Vagina (tissue), 2 donors: ENCODE measurements at regions of chr2 and their contacts with region 1.

Region 1: DNA sequence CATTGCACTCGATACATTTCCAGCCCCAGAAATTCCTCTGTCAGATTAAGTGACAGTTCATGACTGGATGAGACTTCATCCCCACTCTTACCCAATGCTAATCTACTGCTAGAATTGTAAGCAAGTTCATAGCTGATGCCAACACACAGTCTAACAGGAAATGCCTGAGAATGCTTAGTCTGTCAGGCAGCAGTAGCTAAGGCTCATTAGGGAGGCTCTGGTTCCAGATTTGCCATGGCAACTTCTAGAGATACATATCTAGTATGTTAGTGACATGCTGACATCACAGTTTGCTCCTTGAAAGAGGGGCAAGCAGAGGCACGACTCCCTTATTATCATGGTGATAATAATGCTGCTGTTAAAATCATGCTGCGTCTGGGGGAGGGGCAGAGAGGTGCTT is 198.4 kb downstream of the RBM43 start:
- DNase-seq: no peak
- H3K4me3 ChIP-seq: no peak overlapping the region
- H3K27ac ChIP-seq: no peak overlapping the region
- H3K4me1 ChIP-seq: no peaks in the 10 kb centered on the region
- H3K27me3 ChIP-seq: no peaks in the 10 kb centered on the region
- CTCF ChIP-seq: no peak
- POLR2A ChIP-seq: no peak

Region 2: DNA sequence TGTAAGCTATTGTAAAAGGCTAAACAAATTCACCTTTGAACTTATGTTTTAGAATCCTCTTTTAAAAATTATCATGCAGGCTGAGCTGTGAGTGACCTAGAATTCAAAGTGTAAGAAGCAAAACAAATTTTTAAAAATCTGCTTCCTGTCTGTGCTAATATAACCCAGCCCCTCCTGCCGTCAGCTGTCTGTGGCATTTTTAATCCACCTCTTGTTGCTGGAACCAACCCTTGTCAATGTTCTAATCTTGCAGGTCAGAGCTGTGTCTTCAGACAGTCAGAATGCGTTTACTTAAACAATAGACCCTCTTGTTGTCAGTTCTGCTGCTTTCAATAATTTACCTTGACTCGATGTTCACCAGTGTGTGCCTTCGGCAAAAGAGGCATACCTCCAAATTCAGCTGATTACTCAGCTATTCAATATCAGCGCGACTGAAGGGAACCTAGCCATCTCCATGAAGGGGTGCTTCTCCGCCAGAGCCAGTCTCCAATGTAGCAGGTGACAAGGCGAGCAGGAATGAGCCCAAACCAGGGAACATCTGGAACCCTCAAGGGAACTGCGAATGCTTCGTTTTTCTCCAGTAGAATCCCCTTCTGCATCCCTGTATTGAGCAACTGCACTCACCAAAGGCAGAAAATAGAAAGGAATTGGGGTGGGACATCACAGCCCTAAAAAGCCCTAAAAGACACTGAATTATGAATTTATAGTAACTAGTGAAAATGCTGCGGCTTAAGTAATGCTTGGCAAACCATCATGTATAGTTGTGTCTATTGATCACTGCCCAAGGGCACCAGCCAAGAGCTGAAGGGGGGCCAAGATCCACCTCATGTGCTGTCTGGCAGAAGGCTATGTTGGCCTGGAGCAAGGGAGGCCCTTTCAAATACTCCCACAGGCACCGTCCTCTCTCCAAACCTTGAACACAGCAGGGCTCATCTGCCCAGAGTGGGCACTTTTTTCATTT is 1962.3 kb before region 1 on chr2:
- intact Hi-C with region 1: loop called (anchors 10 kb)
- DNase-seq: no peak
- H3K4me3 ChIP-seq: no peak overlapping the region
- H3K27ac ChIP-seq: no peak overlapping the region
- H3K4me1 ChIP-seq: no peaks in the 10 kb centered on the region
- H3K27me3 ChIP-seq: no peaks in the 10 kb centered on the region
- CTCF ChIP-seq: no peak
- POLR2A ChIP-seq: no peak

Region 3: GRCh38 chr2:151381291-151381874 is 318.1 kb after region 1 on chr2:
- intact Hi-C with region 1: loop called (anchors 5 kb)
- DNase-seq: no peak
- H3K4me3 ChIP-seq: no peak overlapping the region
- H3K27ac ChIP-seq: no peak overlapping the region
- H3K4me1 ChIP-seq: no peaks in the 10 kb centered on the region
- H3K27me3 ChIP-seq: no peaks in the 10 kb centered on the region
- CTCF ChIP-seq: no peak
- POLR2A ChIP-seq: no peak